ENCODE measurements at regions of chr16 and their contacts with region 1.

Region 1: GRCh38 chr16:636206-637080 is at the start of gene METTL26:
- DNase-seq: peak; percentile 98
- H3K4me3 Mint-ChIP-seq: peak within 1 kb of the TSS; percentile 93
- H3K27ac Mint-ChIP-seq: peak within 1 kb of the TSS; percentile 95
- H3K4me1 Mint-ChIP-seq: peaks cover 6% of the 10 kb centered on the region
- H3K27me3 Mint-ChIP-seq: peaks cover 2% of the 10 kb centered on the region
- total RNA-seq, gene METTL26: 146 and 153 TPM in 2 replicates

Region 2: DNA sequence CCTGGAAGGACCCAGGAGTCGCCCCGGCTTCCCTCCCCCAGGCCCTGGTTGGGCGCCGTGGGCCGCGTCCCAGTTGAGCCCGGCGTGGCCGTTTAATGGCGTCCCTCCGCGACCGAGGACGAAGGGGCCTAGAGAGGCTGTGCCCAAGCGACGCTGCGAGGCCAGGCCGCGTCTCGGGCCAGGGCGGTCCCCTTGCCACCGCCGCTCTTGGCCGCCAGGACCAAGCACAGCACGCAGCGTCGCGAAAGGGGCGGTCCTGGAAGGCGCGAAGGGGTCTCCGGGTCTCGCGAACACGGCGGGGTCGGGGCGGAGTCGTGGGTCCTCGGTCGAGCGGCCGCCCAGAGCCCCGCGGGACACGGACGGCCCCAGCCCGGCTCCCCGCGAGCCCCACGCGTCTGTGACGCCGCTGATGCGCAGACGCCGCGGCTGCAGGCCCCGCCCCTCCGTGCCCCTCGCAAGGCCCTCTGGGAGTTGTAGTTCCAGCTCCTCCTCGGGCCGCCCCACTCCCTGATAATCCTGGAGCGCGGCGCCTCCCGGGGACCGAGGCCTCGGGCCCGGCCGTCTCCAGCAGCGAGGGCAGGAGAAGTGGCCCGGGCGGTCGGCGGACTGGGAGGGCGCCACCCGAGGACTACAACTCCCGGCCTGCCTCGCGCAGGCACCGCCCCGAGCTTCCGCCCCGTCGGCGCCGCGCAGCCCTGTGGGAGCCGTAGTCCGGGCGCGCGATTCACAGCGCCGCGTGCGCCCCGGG is 109.3 kb before region 1 on chr16 and contains the start of gene CAPN15:
- intact Hi-C with region 1: loop called (anchors 1 kb)
- DNase-seq: peak; percentile 96
- H3K4me3 Mint-ChIP-seq: peak within 1 kb of the TSS; percentile 94
- H3K27ac Mint-ChIP-seq: peak within 1 kb of the TSS; percentile 95
- H3K4me1 Mint-ChIP-seq: peaks cover 18% of the 10 kb centered on the region
- H3K27me3 Mint-ChIP-seq: no peaks in the 10 kb centered on the region
- total RNA-seq, gene CAPN15: 121 and 124 TPM in 2 replicates

Region 3: GRCh38 chr16:648781-649589 is 12.5 kb after region 1 on chr16 and contains the start of gene WDR90:
- intact Hi-C with region 1: loop called (anchors 1 kb)
- DNase-seq: peak; percentile 98
- H3K4me3 Mint-ChIP-seq: peak within 1 kb of the TSS; percentile 86
- H3K27ac Mint-ChIP-seq: peak within 1 kb of the TSS; percentile 85
- H3K4me1 Mint-ChIP-seq: peaks cover 7% of the 10 kb centered on the region
- H3K27me3 Mint-ChIP-seq: no peaks in the 10 kb centered on the region
- total RNA-seq, gene WDR90: 99.9 and 111 TPM in 2 replicates

Region 4: GRCh38 chr16:667780-668518 is 31.5 kb after region 1 on chr16 and contains the start of gene RHOT2:
- intact Hi-C with region 1: no loop called
- DNase-seq: peak; percentile 99
- H3K4me3 Mint-ChIP-seq: peak within 1 kb of the TSS; percentile 84
- H3K27ac Mint-ChIP-seq: peak within 1 kb of the TSS; percentile 92
- H3K4me1 Mint-ChIP-seq: peaks cover 4% of the 10 kb centered on the region
- H3K27me3 Mint-ChIP-seq: no peaks in the 10 kb centered on the region
- total RNA-seq, gene RHOT2: 172 and 183 TPM in 2 replicates